ENCODE measurements at regions of chr1 and their contacts with region 1.

Region 1: GRCh38 chr1:27979151-27979858 is 19.5 kb downstream of the XKR8 start:
- DNase-seq: peak; percentile 67 to 90 (median 79)
- ATAC-seq: peak; percentile 93
- H3K4me3 ChIP-seq: no peak overlapping the region
- H3K27ac ChIP-seq: peak overlapping the region; percentile 81
- H3K4me1 ChIP-seq: peaks cover 5 to 18% of the 10 kb centered on the region in 2 experiments; a peak in 4 of 5 replicates
- H3K27me3 ChIP-seq: no peaks in the 10 kb centered on the region
- CTCF ChIP-seq: peak; percentile 66 to 96 (median 73); a peak in 5 of 6 replicates
- EP300 ChIP-seq: peak; percentile 95
- POLR2A ChIP-seq: no peak
- RAD21 ChIP-seq: peak; percentile 94 to 96

Region 2: DNA sequence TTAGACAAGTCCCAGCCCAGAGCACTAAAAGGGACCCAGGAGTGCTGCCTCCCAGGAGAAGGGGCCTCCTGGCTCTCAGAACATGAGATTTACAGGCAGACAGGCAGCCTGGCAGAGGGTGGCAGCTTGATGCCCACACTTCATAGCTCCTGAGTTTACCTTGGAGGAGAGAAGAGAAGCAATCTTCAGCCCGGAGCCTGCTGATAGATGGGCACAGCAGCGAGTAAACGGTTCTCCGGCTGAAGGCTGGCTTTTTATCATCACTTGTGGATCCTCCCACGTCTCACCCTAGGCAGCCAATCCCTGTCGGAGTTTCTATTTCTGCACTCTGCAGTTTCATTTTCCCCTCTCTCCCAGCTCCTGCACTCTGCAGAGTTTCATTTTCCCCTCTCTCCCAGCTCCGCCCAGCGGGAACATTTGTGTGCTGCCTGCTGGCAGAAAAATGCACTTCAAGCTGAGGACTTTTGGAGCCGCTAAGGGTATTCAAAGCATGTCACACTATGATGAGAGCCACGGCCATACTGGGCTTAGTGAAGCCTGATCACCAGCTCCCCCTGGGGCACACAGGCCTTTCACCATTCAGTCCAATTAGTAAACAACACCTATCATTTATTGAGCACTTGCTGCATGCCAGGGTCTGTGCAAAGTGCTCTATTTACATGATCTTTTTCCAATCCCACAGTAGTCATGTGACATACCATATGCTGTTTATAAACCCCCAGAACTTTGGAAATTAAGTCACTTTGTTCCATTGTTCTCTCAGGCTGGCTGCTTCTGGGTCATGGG is 307.1 kb before region 1 on chr1 and contains the start of gene IFI6:
- CTCF ChIA-PET with region 1: interaction called, 8 read pairs
- POLR2A ChIA-PET with region 1: no interaction called
- in situ Hi-C with region 1: no loop called
- intact Hi-C with region 1: loop called (anchors 5 kb)
- DNase-seq: peak; percentile 79 to 97 (median 86)
- ATAC-seq: peak; percentile 94
- H3K4me3 ChIP-seq: peak within 1 kb of the TSS; percentile 38
- H3K27ac ChIP-seq: peak within 1 kb of the TSS; percentile 42; the same call in 2 of the 3 replicates
- H3K4me1 ChIP-seq: peaks cover 20 to 24% of the 10 kb centered on the region in 2 experiments
- H3K27me3 ChIP-seq: no peaks in the 10 kb centered on the region
- CTCF ChIP-seq: peak; percentile 49 to 64 (median 56); a peak in 5 of 6 replicates
- EP300 ChIP-seq: no peak
- POLR2A ChIP-seq: no peak
- RAD21 ChIP-seq: peak; percentile 33 to 46; a peak in 3 of 4 replicates
- polyA plus RNA-seq, gene IFI6: 0.17 to 0.76 TPM

Region 3: GRCh38 chr1:27760426-27760825 is 218.9 kb before region 1 on chr1:
- CTCF ChIA-PET with region 1: interaction called, 7 read pairs
- POLR2A ChIA-PET with region 1: interaction called, 3 read pairs
- in situ Hi-C with region 1: no loop called
- intact Hi-C with region 1: loop called (anchors 5 kb)
- DNase-seq: peak in 1 of 4 experiments; percentile 36
- ATAC-seq: peak; percentile 79
- H3K4me3 ChIP-seq: no peak overlapping the region
- H3K27ac ChIP-seq: no peak overlapping the region
- H3K4me1 ChIP-seq: no peaks in the 10 kb centered on the region; a peak in 2 of 5 replicates
- H3K27me3 ChIP-seq: no peaks in the 10 kb centered on the region
- CTCF ChIP-seq: peak; percentile 14 to 49 (median 22); a peak in 3 of 6 replicates
- EP300 ChIP-seq: no peak
- POLR2A ChIP-seq: no peak
- RAD21 ChIP-seq: peak in 1 of 2 experiments; percentile 51; a peak in 2 of 4 replicates

Region 4: GRCh38 chr1:27940297-27940696 is 39.0 kb before region 1 on chr1:
- CTCF ChIA-PET with region 1: interaction called, 11 read pairs
- POLR2A ChIA-PET with region 1: no interaction called
- in situ Hi-C with region 1: no loop called
- intact Hi-C with region 1: loop called (anchors 2 kb)
- DNase-seq: peak; percentile 74 to 83 (median 80)
- ATAC-seq: peak; percentile 76
- H3K4me3 ChIP-seq: no peak overlapping the region
- H3K27ac ChIP-seq: no peak overlapping the region
- H3K4me1 ChIP-seq: peaks cover 15 to 18% of the 10 kb centered on the region in 2 experiments
- H3K27me3 ChIP-seq: no peaks in the 10 kb centered on the region
- CTCF ChIP-seq: peak; percentile 53 to 74 (median 69)
- EP300 ChIP-seq: no peak
- POLR2A ChIP-seq: no peak
- RAD21 ChIP-seq: peak in 1 of 2 experiments; percentile 57; a peak in 3 of 4 replicates

Region 5: DNA sequence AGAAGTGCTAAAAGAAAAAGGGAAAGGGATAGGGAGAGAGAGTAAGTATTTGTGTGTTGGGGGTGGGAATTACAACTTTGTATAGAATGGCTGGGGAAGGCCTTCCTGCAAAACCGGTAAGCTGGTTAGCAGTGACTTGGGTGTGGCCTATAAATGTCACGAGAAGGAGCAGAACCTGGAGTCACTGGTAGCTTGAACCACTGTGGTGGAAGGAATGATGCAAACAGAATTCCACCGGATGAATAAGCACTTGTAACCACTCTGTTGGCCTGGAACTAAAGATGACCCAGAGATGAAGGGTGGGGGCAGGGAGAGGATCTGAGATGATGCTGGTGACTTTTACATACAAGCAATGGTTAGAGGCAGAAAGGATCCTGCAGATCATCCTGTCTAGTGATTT is 10.6 kb before region 1 on chr1:
- CTCF ChIA-PET with region 1: no interaction called
- POLR2A ChIA-PET with region 1: interaction called, 13 read pairs
- in situ Hi-C with region 1: no loop called
- intact Hi-C with region 1: no loop called
- DNase-seq: no peak
- ATAC-seq: no peak
- H3K4me3 ChIP-seq: no peak overlapping the region
- H3K27ac ChIP-seq: no peak overlapping the region
- H3K4me1 ChIP-seq: peaks cover 0 to 5% of the 10 kb centered on the region in 2 experiments; a peak in 1 of 5 replicates
- H3K27me3 ChIP-seq: no peaks in the 10 kb centered on the region
- CTCF ChIP-seq: no peak
- EP300 ChIP-seq: no peak
- POLR2A ChIP-seq: no peak
- RAD21 ChIP-seq: no peak